ENCODE measurements at regions of chr1 and their contacts with region 1.

Region 1: GRCh38 chr1:181088079-181089016 is at the start of gene IER5:
- DNase-seq: peak; percentile 96 to 97 (median 97)
- ATAC-seq: peak; percentile 75 to 88 (median 84)
- H3K4me3 ChIP-seq: peak within 1 kb of the TSS; percentile 68 to 75 (median 74)
- H3K27ac ChIP-seq: peak within 1 kb of the TSS; percentile 65 to 92 (median 87)
- H3K4me1 ChIP-seq: peaks cover 0 to 22% (median 8%) of the 10 kb centered on the region in 4 donors
- H3K27me3 ChIP-seq: no peaks in the 10 kb centered on the region
- CTCF ChIP-seq: peak in 2 of 4 donors; percentile 17 to 28
- POLR2A ChIP-seq: peak; percentile 99
- total RNA-seq, gene IER5: 2.0 to 6.2 (median 3.4) TPM

Region 2: DNA sequence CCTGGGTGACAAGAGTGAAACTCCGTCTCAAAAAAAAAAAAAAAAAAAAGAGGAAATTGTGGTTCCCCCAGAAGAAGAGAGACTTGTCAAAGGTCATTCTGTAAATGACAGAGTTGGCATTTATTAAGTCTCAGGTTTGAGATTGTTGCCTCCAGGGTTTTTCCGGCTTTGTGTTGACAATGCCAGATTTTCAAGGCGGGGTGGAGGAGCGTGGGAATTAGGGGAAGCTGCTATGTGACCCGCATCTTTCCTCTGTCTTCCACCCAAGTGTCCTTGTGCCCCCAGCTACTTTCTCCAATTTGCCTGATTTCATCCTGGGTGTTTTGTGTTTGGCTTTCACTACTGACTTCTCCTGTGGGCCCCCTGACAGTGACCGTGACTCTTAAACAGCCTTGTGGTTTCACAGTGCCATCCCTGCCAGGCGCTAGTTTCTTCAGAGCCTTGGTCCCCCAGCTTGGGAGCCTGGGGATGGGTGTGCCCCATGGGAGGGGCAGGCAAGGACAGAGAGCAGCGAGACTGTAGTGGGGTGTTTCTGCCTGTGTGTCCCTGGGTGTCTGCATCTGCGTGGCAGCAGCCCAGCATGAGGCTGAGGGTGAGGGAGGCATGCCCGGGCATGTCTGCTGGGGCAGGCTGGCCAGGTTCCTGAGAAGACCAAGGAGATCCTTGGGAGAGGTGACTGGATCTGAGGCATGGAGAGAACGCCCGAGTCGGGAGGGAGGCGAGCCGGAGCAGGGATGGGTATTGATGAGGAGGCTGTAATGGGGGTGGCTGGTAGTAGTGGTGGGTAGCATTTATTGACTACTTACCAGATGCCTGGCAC is 46.4 kb after region 1 on chr1:
- intact Hi-C with region 1: loop called in 1 of 2 experiments (anchors 10 kb)
- DNase-seq: peak in 1 of 3 donors; percentile 42
- ATAC-seq: peak; percentile 24 to 54 (median 45)
- H3K4me3 ChIP-seq: no peak overlapping the region
- H3K27ac ChIP-seq: peak overlapping the region in 2 of 3 donors; percentile 29 to 32
- H3K4me1 ChIP-seq: peaks cover 0 to 6% (median under 1%) of the 10 kb centered on the region in 4 donors
- H3K27me3 ChIP-seq: no peaks in the 10 kb centered on the region
- CTCF ChIP-seq: no peak
- POLR2A ChIP-seq: no peak

Region 3: DNA sequence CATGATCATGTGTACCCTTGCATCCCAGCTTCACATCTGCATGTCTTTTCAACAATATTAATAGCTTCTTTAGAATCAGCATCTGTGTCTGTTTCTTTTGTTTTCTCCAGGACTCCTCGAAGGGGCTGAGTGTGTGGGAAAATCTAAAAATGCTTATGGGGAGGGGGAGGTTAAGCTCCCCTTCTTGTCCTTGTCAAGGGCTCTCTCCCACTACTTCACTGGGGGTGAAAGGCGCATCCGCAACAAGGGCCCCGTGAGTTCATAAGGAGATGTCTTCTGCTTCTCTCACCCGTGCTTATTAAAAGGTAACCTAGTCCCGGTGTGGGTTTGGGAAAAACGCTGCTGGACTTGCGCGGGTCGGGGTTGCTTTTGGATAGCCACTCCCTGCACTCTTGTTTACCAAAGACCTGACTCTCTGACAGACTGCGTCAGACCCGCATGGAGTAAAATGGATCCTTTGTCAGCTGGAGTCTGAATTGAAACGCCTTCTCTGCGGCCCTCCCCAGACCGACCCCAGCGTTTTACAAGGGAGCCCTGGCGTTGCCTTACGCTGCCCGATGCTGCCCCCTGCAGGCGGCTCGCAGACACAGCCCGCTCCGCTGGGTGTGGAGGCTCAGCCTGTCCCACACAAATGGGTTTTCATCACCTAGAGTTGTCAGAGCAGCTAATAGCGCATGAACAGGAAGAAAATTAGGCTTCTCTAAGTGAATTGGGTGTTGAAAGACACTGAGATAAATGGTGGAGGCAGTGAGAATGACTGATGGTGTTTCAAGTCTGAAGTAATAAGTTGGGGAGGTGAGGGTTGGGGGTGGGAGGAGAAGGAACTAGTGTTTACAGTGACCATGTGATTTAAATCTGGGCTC is 54.0 kb after region 1 on chr1:
- intact Hi-C with region 1: loop called (anchors 5 to 10 kb)
- DNase-seq: peak; percentile 82 to 87 (median 85)
- ATAC-seq: peak; percentile 94 to 99 (median 98)
- H3K4me3 ChIP-seq: peak overlapping the region in 1 of 3 donors; percentile 33
- H3K27ac ChIP-seq: no peak overlapping the region
- H3K4me1 ChIP-seq: peaks cover 0 to 6% (median 0%) of the 10 kb centered on the region in 4 donors
- H3K27me3 ChIP-seq: no peaks in the 10 kb centered on the region
- CTCF ChIP-seq: peak; percentile 95 to 98 (median 97)
- POLR2A ChIP-seq: no peak

Measured in right lobe of liver (tissue), 6 donors.